ENCODE measurements at regions of chr7 and their contacts with region 1.

Region 1: GRCh38 chr7:31744294-31744874 is 57.4 kb downstream of the PPP1R17 start:
- DNase-seq: peak; percentile 20
- H3K4me3 Mint-ChIP-seq: no peak overlapping the region
- H3K27ac Mint-ChIP-seq: no peak overlapping the region
- H3K4me1 Mint-ChIP-seq: peaks cover 2% of the 10 kb centered on the region
- H3K27me3 Mint-ChIP-seq: no peaks in the 10 kb centered on the region

Region 2: GRCh38 chr7:32212321-32212720 is 467.9 kb after region 1 on chr7:
- intact Hi-C with region 1: loop called (anchors 5 kb)
- DNase-seq: no peak
- H3K4me3 Mint-ChIP-seq: no peak overlapping the region
- H3K27ac Mint-ChIP-seq: no peak overlapping the region
- H3K4me1 Mint-ChIP-seq: no peaks in the 10 kb centered on the region
- H3K27me3 Mint-ChIP-seq: no peaks in the 10 kb centered on the region

Region 3: GRCh38 chr7:32347244-32347828 is 603.0 kb after region 1 on chr7:
- intact Hi-C with region 1: loop called (anchors 2 kb)
- DNase-seq: peak; percentile 10
- H3K4me3 Mint-ChIP-seq: no peak overlapping the region
- H3K27ac Mint-ChIP-seq: no peak overlapping the region
- H3K4me1 Mint-ChIP-seq: no peaks in the 10 kb centered on the region
- H3K27me3 Mint-ChIP-seq: no peaks in the 10 kb centered on the region